A549 (cell line): ENCODE measurements at regions of chr10 and their contacts with region 1.

Region 1: DNA sequence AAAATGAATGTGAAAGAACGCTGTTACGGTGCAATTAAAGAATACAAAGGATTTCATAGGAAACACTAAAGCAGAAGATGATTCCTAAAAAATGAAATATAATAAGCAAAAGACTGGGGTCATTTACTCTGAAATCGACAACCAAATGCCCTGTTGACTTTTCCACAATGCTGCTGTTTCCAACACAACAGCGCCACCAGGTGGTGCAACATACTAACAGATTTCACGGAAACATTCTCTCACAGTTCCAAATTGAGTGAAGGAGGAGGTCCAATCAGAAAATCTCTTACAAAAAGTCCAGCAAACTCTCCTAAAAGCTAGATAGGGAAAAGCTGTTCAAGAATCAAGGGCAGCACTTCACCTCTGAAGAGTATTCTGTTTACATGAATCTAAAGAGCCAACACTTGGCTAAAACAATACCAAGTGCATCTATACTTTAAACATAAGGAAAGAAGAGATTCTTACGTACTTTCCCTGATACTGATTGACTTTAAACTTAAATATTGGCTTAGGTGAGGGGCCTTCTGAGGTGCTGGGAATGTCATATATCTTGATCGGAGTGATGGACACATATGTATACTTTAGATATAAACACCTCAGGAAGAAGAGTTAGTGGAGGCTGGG is 55.9 kb downstream of the UPF2 start:
- DNase-seq: peak; percentile 57 to 89
- ATAC-seq: peak; percentile 92
- H3K4me3 ChIP-seq: 0 out of 3 replicates have a peak overlapping the region, but pooled peaks have one; percentile 7
- H3K27ac ChIP-seq: peak overlapping the region; percentile 1 to 32; a peak in 4 of 6 replicates
- H3K4me1 ChIP-seq: peaks cover 10% of the 10 kb centered on the region; the same call in 2 of the 3 replicates
- CTCF ChIP-seq: peak; percentile 98
- EP300 ChIP-seq: no peak
- POLR2A ChIP-seq: no peak
- RAD21 ChIP-seq: peak; percentile 96 to 97

Region 2: GRCh38 chr10:11782793-11783557 is 203.7 kb before region 1 on chr10:
- CTCF ChIA-PET with region 1: interaction called, 61 read pairs
- POLR2A ChIA-PET with region 1: no interaction called
- DNase-seq: peak; percentile 63 to 72
- ATAC-seq: peak; percentile 70 to 85; a peak in 5 of 6 replicates
- H3K4me3 ChIP-seq: no peak overlapping the region
- H3K27ac ChIP-seq: no peak overlapping the region
- H3K4me1 ChIP-seq: no peaks in the 10 kb centered on the region
- CTCF ChIP-seq: peak; percentile 85
- EP300 ChIP-seq: no peak
- POLR2A ChIP-seq: no peak
- RAD21 ChIP-seq: peak; percentile 77 to 79

Region 3: DNA sequence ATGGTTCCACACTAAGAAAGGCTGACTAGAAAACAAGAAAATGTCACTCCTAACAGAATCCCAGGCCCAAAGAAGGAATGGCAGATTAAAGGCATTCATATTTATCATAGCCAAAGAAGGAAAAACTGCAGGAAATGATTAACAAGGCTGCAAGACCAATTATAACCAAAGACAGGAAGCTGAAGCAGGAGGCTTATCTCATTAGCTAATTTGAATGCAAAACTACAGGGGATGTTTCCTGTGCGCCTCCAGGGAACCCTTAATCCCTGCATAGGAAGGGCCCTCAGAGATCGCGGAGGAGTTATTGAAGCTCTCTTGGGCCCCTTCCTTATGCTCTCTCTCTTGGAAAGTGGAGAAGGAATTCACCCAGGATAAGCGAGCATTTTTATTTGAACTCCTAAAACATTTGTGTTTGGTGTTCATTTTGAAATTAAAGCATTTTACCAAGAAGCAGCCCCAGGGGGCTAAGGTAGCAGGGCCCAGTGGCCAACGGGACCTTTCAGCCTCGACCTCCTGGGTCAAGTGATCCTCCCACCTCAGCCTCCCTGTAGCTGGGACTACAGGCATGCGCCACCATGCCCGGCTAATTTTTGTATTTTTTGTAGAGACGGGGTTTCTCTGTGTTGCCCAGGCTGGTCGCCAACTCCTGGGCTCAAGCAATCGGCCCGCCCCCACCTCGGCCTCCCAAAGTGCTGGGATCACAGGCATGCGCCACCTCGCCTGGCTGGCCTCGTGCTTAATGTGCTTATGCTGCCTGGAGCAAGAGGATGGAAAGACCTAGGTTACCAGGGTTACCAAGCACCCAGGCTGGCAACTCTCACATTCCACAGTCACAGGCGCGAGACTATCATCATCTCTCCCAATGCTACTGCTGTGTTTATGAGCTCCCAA is 187.6 kb before region 1 on chr10:
- CTCF ChIA-PET with region 1: interaction called, 41 read pairs
- POLR2A ChIA-PET with region 1: no interaction called
- DNase-seq: no peak
- ATAC-seq: no peak
- H3K4me3 ChIP-seq: no peak overlapping the region
- H3K27ac ChIP-seq: no peak overlapping the region
- H3K4me1 ChIP-seq: peaks cover 22% of the 10 kb centered on the region
- CTCF ChIP-seq: no peak
- EP300 ChIP-seq: no peak
- POLR2A ChIP-seq: no peak
- RAD21 ChIP-seq: no peak

Region 4: GRCh38 chr10:11823122-11823988 is 163.3 kb before region 1 on chr10 and contains the start of gene PROSER2:
- CTCF ChIA-PET with region 1: interaction called, 11 read pairs
- POLR2A ChIA-PET with region 1: no interaction called
- DNase-seq: peak; percentile 67 to 77
- ATAC-seq: peak; percentile 85
- H3K4me3 ChIP-seq: peak within 1 kb of the TSS; percentile 99
- H3K27ac ChIP-seq: peak within 1 kb of the TSS; percentile 92 to 93
- H3K4me1 ChIP-seq: peaks cover 34% of the 10 kb centered on the region
- CTCF ChIP-seq: no peak
- EP300 ChIP-seq: no peak
- POLR2A ChIP-seq: peak; percentile 80
- RAD21 ChIP-seq: 0 out of 5 replicates have a peak, but pooled peaks of 1 of the 2 experiments have one; percentile 11
- polyA plus RNA-seq, gene PROSER2: 8.9 and 10.1 TPM in 2 replicates

Region 5: GRCh38 chr10:11853468-11853867 is 133.2 kb before region 1 on chr10:
- CTCF ChIA-PET with region 1: interaction called, 13 read pairs
- POLR2A ChIA-PET with region 1: no interaction called
- DNase-seq: peak; percentile 35 to 42
- ATAC-seq: peak in 1 of 2 experiments; percentile 73; a peak in 3 of 6 replicates
- H3K4me3 ChIP-seq: no peak overlapping the region
- H3K27ac ChIP-seq: no peak overlapping the region
- H3K4me1 ChIP-seq: no peaks in the 10 kb centered on the region
- CTCF ChIP-seq: no peak; the same call in 2 of the 3 replicates
- EP300 ChIP-seq: no peak
- POLR2A ChIP-seq: no peak
- RAD21 ChIP-seq: peak in 1 of 2 experiments; percentile 46; a peak in 2 of 5 replicates

Region 6: GRCh38 chr10:11950325-11951018 is 36.2 kb before region 1 on chr10:
- CTCF ChIA-PET with region 1: interaction called, 21 read pairs
- POLR2A ChIA-PET with region 1: no interaction called
- DNase-seq: no peak
- ATAC-seq: no peak
- H3K4me3 ChIP-seq: no peak overlapping the region
- H3K27ac ChIP-seq: no peak overlapping the region
- H3K4me1 ChIP-seq: no peaks in the 10 kb centered on the region
- CTCF ChIP-seq: no peak
- EP300 ChIP-seq: no peak
- POLR2A ChIP-seq: no peak
- RAD21 ChIP-seq: no peak

Region 7: GRCh38 chr10:11975795-11976194 is 10.9 kb before region 1 on chr10:
- CTCF ChIA-PET with region 1: interaction called, 19 read pairs
- POLR2A ChIA-PET with region 1: no interaction called
- DNase-seq: no peak
- ATAC-seq: no peak
- H3K4me3 ChIP-seq: no peak overlapping the region
- H3K27ac ChIP-seq: no peak overlapping the region
- H3K4me1 ChIP-seq: no peaks in the 10 kb centered on the region
- CTCF ChIP-seq: no peak
- EP300 ChIP-seq: no peak
- POLR2A ChIP-seq: no peak
- RAD21 ChIP-seq: no peak

Region 8: GRCh38 chr10:12140038-12140437 is 153.3 kb after region 1 on chr10:
- CTCF ChIA-PET with region 1: no interaction called
- POLR2A ChIA-PET with region 1: no interaction called
- DNase-seq: no peak
- ATAC-seq: no peak
- H3K4me3 ChIP-seq: no peak overlapping the region
- H3K27ac ChIP-seq: no peak overlapping the region
- H3K4me1 ChIP-seq: no peaks in the 10 kb centered on the region
- CTCF ChIP-seq: no peak
- EP300 ChIP-seq: no peak
- POLR2A ChIP-seq: no peak
- RAD21 ChIP-seq: no peak